IMR-90 (cell line): ENCODE measurements at regions of chr11 and their contacts with region 1.

Region 1: GRCh38 chr11:73288873-73289707 is 17.0 kb downstream of the P2RY6 start:
- DNase-seq: peak; percentile 65
- ATAC-seq: peak; percentile 98
- H3K4me3 ChIP-seq: no peak overlapping the region
- H3K27ac ChIP-seq: peak overlapping the region; percentile 1; the same call in 1 of the 2 replicates
- H3K4me1 ChIP-seq: peaks cover 8% of the 10 kb centered on the region
- H3K27me3 ChIP-seq: no peaks in the 10 kb centered on the region
- CTCF ChIP-seq: peak; percentile 99
- POLR2A ChIP-seq: peak; percentile 50; the same call in 1 of the 2 replicates
- RAD21 ChIP-seq: peak; percentile 100

Region 2: DNA sequence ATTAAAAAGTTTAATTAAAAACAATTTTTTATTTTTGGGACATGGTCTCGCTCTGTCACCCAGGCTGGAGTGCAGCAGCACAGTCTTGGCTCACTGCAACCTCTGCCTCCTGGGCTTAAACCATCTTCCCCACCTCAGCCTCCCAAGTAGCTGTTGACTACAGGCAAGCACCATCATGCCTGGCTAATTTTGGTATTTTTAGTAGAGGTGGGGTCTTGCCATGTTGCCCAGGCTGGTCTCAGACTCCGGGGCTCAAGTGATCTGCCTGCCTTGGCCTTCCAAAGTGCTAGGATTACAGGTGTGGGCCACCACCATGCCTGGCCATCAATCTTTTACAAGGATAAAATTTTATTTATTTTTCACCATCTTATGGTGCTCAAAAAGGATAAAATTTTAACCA is 1001.8 kb before region 1 on chr11:
- CTCF ChIA-PET with region 1: no interaction called
- POLR2A ChIA-PET with region 1: no interaction called
- dilution Hi-C with region 1: no loop called
- in situ Hi-C with region 1: no loop called
- intact Hi-C with region 1: no loop called
- DNase-seq: no peak
- ATAC-seq: no peak
- H3K4me3 ChIP-seq: no peak overlapping the region
- H3K27ac ChIP-seq: no peak overlapping the region
- H3K4me1 ChIP-seq: no peaks in the 10 kb centered on the region
- H3K27me3 ChIP-seq: peaks cover 6% of the 10 kb centered on the region
- CTCF ChIP-seq: no peak
- POLR2A ChIP-seq: no peak
- RAD21 ChIP-seq: no peak

Region 3: DNA sequence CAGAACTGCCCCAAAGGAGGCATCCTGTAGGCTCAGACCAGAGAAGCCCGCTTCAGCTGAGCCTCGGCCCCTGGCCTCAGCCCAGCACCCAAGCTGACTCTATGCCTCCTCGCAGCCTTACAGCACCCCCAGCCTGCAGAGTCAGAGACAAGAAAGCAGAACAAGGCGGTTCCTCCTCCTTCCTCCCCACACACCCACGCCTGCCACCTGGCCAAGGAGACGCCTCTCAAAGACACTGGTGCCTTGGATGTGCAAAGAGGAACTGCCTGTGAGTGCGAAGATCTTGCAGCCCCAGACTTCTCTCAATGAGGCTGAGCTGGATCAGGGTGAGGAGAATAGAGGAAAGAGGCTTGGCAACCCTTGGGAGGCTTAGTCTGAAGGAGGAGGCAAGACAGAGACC is 675.1 kb before region 1 on chr11:
- CTCF ChIA-PET with region 1: no interaction called
- POLR2A ChIA-PET with region 1: no interaction called
- dilution Hi-C with region 1: no loop called
- in situ Hi-C with region 1: no loop called
- intact Hi-C with region 1: no loop called
- DNase-seq: no peak
- ATAC-seq: no peak
- H3K4me3 ChIP-seq: no peak overlapping the region
- H3K27ac ChIP-seq: no peak overlapping the region
- H3K4me1 ChIP-seq: no peaks in the 10 kb centered on the region
- H3K27me3 ChIP-seq: peaks cover 84% of the 10 kb centered on the region
- CTCF ChIP-seq: no peak
- POLR2A ChIP-seq: no peak
- RAD21 ChIP-seq: no peak

Region 4: DNA sequence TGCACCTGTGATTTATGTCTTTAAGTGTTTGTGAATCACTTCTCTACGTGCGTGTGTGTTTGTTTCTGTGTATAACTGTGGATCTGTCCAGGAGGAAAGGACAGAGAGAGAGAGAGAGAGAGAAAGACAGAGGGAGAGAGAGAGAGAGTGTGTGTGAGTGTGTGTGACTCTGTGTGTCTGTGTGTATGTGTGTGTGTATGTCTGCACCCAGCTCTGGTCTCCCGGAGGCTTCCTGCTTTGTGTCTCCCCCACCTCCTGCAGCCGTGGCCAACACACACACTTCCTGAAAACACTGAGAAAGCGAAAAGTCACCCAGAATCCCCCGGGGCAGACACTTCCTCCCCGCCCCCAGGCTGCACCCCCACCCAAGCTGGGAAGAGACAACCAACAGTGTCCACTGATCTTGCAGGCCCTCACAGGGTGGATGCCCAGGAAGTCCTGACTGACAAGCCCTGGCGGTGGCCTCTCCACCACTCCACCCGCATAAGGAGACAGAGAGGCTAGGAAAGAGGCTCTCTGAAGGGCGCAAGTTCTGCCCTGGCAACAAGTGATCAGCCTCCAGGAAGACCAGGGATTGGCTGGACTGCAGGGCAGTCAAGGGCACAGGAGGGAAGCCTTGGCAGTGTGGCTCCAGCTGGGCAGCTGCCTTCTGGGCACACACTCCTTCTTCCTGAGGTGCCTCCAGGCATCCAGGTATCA is 566.9 kb before region 1 on chr11:
- CTCF ChIA-PET with region 1: no interaction called
- POLR2A ChIA-PET with region 1: no interaction called
- dilution Hi-C with region 1: no loop called
- in situ Hi-C with region 1: loop called (anchors 10 kb)
- intact Hi-C with region 1: loop called (anchors 5 kb)
- DNase-seq: peak; percentile 89
- ATAC-seq: peak; percentile 92
- H3K4me3 ChIP-seq: peak overlapping the region; percentile 41
- H3K27ac ChIP-seq: peak overlapping the region; percentile 93
- H3K4me1 ChIP-seq: peaks cover 27% of the 10 kb centered on the region
- H3K27me3 ChIP-seq: no peaks in the 10 kb centered on the region
- CTCF ChIP-seq: no peak
- POLR2A ChIP-seq: peak; percentile 54; the same call in 1 of the 2 replicates
- RAD21 ChIP-seq: no peak

Region 5: GRCh38 chr11:72831513-72832300 is 457.4 kb before region 1 on chr11:
- CTCF ChIA-PET with region 1: no interaction called
- POLR2A ChIA-PET with region 1: no interaction called
- dilution Hi-C with region 1: no loop called
- in situ Hi-C with region 1: loop called (anchors 5 kb)
- intact Hi-C with region 1: loop called (anchors 2 kb)
- DNase-seq: peak; percentile 71
- ATAC-seq: peak; percentile 94
- H3K4me3 ChIP-seq: no peak overlapping the region
- H3K27ac ChIP-seq: no peak overlapping the region
- H3K4me1 ChIP-seq: peaks cover 9% of the 10 kb centered on the region
- H3K27me3 ChIP-seq: no peaks in the 10 kb centered on the region
- CTCF ChIP-seq: peak; percentile 91
- POLR2A ChIP-seq: no peak
- RAD21 ChIP-seq: peak; percentile 96

Region 6: DNA sequence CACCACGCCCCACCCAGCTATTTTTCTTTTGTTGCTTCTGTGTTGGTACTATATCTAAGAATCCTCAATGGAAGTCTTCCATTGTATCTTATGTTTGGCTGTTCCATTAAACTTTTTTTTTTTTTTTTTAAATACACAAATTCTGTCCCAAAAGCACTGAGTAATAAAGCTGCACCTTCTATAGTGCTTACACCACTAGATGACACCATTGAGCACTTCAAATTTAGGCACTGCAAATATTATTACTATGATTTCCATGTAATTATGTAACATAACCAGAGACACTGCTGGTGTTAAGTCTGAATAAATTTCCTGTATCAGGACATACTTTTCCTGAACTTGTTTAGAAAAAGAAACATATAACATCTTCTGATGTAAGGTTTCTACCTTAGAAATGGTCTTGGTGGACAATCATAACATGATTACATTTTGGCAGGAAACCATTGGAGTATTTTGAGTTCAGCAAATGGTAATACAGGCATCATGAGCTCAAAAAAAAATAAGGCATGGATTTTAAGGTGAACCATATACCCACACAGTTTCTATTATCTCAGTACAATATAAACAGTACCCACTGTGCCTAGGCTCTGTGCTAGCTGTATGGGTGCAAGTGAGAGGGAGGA is 364.4 kb before region 1 on chr11:
- CTCF ChIA-PET with region 1: no interaction called
- POLR2A ChIA-PET with region 1: no interaction called
- dilution Hi-C with region 1: no loop called
- in situ Hi-C with region 1: no loop called
- intact Hi-C with region 1: loop called (anchors 1 kb)
- DNase-seq: peak; percentile 57
- ATAC-seq: peak; percentile 64
- H3K4me3 ChIP-seq: no peak overlapping the region
- H3K27ac ChIP-seq: no peak overlapping the region
- H3K4me1 ChIP-seq: no peaks in the 10 kb centered on the region
- H3K27me3 ChIP-seq: no peaks in the 10 kb centered on the region
- CTCF ChIP-seq: peak; percentile 63
- POLR2A ChIP-seq: no peak
- RAD21 ChIP-seq: peak; percentile 62

Region 7: DNA sequence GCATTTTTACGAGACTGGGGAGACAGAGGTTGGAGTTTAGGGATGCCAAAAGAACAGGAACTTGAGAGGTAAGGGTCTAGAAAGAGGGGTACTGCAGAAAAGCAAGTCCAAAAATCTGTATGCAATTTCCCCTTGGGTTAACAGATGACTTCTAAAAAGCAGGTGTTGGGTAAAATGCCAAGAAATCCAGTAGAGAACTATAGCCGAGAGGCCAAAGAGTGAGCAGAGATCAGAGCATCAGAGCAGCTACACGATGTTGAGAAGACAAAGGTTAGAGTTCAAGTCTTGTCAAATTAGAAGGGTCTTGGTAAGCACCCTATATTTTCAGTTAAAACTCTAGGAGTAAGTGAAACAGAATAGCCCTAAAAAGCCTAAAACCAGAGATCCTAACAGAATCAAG is 292.1 kb before region 1 on chr11:
- CTCF ChIA-PET with region 1: no interaction called
- POLR2A ChIA-PET with region 1: no interaction called
- dilution Hi-C with region 1: no loop called
- in situ Hi-C with region 1: no loop called
- intact Hi-C with region 1: no loop called
- DNase-seq: no peak
- ATAC-seq: no peak
- H3K4me3 ChIP-seq: no peak overlapping the region
- H3K27ac ChIP-seq: no peak overlapping the region
- H3K4me1 ChIP-seq: no peaks in the 10 kb centered on the region
- H3K27me3 ChIP-seq: no peaks in the 10 kb centered on the region
- CTCF ChIP-seq: no peak
- POLR2A ChIP-seq: no peak
- RAD21 ChIP-seq: no peak

Region 8: DNA sequence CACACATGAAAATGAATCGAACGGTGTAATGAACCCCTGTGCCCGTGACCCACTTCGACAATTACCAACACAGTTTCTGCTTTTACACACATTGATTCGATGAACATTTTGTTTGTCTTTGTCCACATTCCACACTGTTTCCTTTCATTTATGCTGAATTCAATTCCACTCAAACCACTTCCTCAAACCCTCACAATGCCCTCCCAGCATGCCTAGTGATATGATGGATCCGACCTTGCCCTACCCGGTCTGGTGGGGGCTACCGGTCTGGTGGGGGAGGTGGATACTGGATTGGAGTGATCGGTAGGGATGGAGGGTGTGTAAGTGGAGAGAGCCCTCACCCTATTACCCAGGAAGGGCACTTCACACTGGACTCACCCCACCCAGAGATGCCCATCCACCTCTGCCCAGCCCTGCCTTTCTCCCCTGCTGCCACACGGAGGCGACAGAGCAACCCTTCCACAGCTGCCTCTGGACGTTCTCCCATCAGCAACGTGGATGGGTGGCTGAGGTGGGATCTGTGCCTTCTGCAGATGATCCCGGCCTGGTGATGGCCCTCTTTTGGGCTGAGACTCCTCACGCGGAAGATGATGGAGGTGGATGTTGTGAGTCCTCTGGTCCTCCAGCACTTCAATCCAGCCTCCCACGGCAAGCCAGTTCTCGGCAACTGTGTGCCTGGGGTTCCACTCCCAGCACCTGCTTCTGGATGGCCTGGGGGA is 104.0 kb before region 1 on chr11:
- CTCF ChIA-PET with region 1: interaction called, 34 read pairs
- POLR2A ChIA-PET with region 1: no interaction called
- dilution Hi-C with region 1: no loop called
- in situ Hi-C with region 1: loop called (anchors 5 kb)
- intact Hi-C with region 1: loop called (anchors 1 kb)
- DNase-seq: peak; percentile 33
- ATAC-seq: peak; percentile 79
- H3K4me3 ChIP-seq: no peak overlapping the region
- H3K27ac ChIP-seq: no peak overlapping the region
- H3K4me1 ChIP-seq: peaks cover 7% of the 10 kb centered on the region
- H3K27me3 ChIP-seq: no peaks in the 10 kb centered on the region; the same call in 1 of the 2 replicates
- CTCF ChIP-seq: peak; percentile 78
- POLR2A ChIP-seq: no peak
- RAD21 ChIP-seq: peak; percentile 78

Region 9: DNA sequence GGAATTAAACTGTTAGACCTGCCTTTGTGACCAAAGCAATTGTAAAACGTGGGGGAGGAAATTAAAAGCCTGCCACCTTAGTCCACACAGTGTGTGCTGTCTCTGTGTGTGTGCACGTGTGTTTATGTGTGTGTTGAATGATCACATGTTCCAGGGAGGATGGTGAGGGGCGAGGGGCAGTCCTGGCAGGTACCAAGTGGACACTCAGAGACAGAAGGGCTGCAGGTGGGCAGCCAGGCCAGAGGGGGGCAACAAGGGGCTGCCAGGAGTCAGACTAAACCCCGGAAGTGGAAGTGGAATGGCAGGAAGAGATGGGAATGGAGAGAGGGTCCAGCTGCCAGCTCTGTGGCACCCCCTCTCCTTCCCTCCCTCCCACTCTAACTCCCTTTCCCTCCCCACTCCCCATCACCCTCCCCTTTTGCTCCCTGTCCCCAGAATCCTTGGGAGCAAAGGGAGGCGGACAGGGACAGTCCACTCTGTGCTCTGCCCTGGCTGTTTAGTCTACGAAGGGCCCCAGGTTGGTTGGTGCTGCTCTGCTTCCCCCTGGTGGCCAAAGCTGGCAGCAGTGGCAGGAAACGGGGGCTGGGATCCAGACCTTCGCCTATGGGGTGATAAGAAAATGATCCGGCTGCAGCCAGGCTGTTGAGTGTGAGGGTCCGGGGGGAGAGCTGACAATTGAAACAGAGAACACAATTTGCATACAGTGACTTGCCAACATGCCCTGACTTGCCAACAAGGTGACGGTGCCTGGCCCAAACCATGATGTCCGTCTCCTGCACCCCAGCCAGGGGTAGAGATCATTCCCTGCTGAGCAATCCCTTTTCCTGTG is 46.6 kb before region 1 on chr11:
- CTCF ChIA-PET with region 1: interaction called, 5 read pairs
- POLR2A ChIA-PET with region 1: no interaction called
- dilution Hi-C with region 1: no loop called
- in situ Hi-C with region 1: no loop called
- intact Hi-C with region 1: loop called (anchors 1 kb)
- DNase-seq: peak; percentile 60
- ATAC-seq: peak; percentile 96
- H3K4me3 ChIP-seq: no peak overlapping the region
- H3K27ac ChIP-seq: peak overlapping the region; percentile 17; the same call in 1 of the 2 replicates
- H3K4me1 ChIP-seq: peaks cover 14% of the 10 kb centered on the region
- H3K27me3 ChIP-seq: 0 out of 2 replicates have a peak, but pooled peaks cover 3% of the 10 kb centered on the region
- CTCF ChIP-seq: peak; percentile 90
- POLR2A ChIP-seq: peak; percentile 47; the same call in 1 of the 2 replicates
- RAD21 ChIP-seq: peak; percentile 91

Region 10: DNA sequence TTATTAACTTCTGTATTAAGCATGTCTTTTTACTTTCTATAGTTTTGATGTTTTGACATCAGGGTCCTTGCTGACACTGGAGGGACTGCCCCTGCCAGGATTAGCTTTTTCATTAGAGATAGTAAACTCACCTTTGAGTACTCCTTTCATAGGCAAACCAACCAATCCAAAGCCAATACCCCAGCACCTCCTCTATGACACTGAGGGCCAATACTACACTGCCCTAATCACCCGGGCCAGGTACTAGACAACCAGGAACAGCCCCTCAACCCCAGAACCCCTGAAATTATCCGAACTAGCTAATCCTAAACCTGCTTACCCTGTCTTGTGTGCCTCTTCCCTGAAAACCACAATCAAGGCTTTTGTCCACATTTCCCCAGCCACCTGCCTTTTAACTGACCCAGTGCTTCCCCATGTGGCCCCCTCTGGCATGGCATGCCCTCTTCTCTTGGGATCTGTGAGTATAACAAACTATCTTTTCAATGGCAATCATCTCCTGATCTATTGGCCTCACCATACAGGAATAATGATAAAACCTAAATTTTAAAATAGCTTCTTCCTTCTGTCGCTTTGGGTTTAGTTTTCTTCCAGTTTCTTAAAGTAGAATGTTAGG is 440.6 kb after region 1 on chr11:
- CTCF ChIA-PET with region 1: no interaction called
- POLR2A ChIA-PET with region 1: no interaction called
- dilution Hi-C with region 1: no loop called
- in situ Hi-C with region 1: no loop called
- intact Hi-C with region 1: no loop called
- DNase-seq: no peak
- ATAC-seq: no peak
- H3K4me3 ChIP-seq: no peak overlapping the region
- H3K27ac ChIP-seq: no peak overlapping the region
- H3K4me1 ChIP-seq: 0 out of 2 replicates have a peak, but pooled peaks cover 1% of the 10 kb centered on the region
- H3K27me3 ChIP-seq: no peaks in the 10 kb centered on the region
- CTCF ChIP-seq: 0 out of 2 replicates have a peak, but pooled peaks have one; percentile 17
- POLR2A ChIP-seq: no peak
- RAD21 ChIP-seq: no peak